AG04450 (cell line): ENCODE measurements at regions of chr4 and their contacts with region 1.

Region 1: GRCh38 chr4:140359562-140360427 is 13.7 kb upstream of the SCOC start:
- DNase-seq: peak; percentile 42
- H3K4me3 ChIP-seq: no peak overlapping the region
- H3K27ac ChIP-seq: no peak overlapping the region
- H3K27me3 ChIP-seq: no peaks in the 10 kb centered on the region
- CTCF ChIP-seq: peak; percentile 75

Region 2: GRCh38 chr4:140012688-140013486 is 346.9 kb before region 1 on chr4:
- CTCF ChIA-PET with region 1: interaction called, 11 read pairs
- POLR2A ChIA-PET with region 1: no interaction called
- DNase-seq: peak; percentile 77
- H3K4me3 ChIP-seq: no peak overlapping the region
- H3K27ac ChIP-seq: no peak overlapping the region
- H3K27me3 ChIP-seq: no peaks in the 10 kb centered on the region
- CTCF ChIP-seq: peak; percentile 80

Region 3: GRCh38 chr4:140343303-140343702 is 16.5 kb before region 1 on chr4:
- CTCF ChIA-PET with region 1: interaction called, 29 read pairs
- POLR2A ChIA-PET with region 1: no interaction called
- DNase-seq: no peak
- H3K4me3 ChIP-seq: no peak overlapping the region
- H3K27ac ChIP-seq: no peak overlapping the region
- H3K27me3 ChIP-seq: peaks cover 9% of the 10 kb centered on the region
- CTCF ChIP-seq: no peak

Region 4: GRCh38 chr4:140382732-140383131 is 22.9 kb after region 1 on chr4:
- CTCF ChIA-PET with region 1: interaction called, 10 read pairs
- POLR2A ChIA-PET with region 1: no interaction called
- DNase-seq: no peak
- H3K4me3 ChIP-seq: no peak overlapping the region
- H3K27ac ChIP-seq: no peak overlapping the region
- H3K27me3 ChIP-seq: no peaks in the 10 kb centered on the region
- CTCF ChIP-seq: no peak

Region 5: GRCh38 chr4:140764774-140765392 is 405.1 kb after region 1 on chr4:
- CTCF ChIA-PET with region 1: no interaction called
- POLR2A ChIA-PET with region 1: no interaction called
- DNase-seq: no peak
- H3K4me3 ChIP-seq: no peak overlapping the region
- H3K27ac ChIP-seq: no peak overlapping the region
- H3K27me3 ChIP-seq: peaks cover 3% of the 10 kb centered on the region
- CTCF ChIP-seq: no peak

Region 6: GRCh38 chr4:140851032-140851636 is 491.3 kb after region 1 on chr4:
- CTCF ChIA-PET with region 1: interaction called, 56 read pairs
- POLR2A ChIA-PET with region 1: no interaction called
- DNase-seq: peak; percentile 43
- H3K4me3 ChIP-seq: no peak overlapping the region
- H3K27ac ChIP-seq: no peak overlapping the region
- H3K27me3 ChIP-seq: no peaks in the 10 kb centered on the region
- CTCF ChIP-seq: peak; percentile 81

Region 7: DNA sequence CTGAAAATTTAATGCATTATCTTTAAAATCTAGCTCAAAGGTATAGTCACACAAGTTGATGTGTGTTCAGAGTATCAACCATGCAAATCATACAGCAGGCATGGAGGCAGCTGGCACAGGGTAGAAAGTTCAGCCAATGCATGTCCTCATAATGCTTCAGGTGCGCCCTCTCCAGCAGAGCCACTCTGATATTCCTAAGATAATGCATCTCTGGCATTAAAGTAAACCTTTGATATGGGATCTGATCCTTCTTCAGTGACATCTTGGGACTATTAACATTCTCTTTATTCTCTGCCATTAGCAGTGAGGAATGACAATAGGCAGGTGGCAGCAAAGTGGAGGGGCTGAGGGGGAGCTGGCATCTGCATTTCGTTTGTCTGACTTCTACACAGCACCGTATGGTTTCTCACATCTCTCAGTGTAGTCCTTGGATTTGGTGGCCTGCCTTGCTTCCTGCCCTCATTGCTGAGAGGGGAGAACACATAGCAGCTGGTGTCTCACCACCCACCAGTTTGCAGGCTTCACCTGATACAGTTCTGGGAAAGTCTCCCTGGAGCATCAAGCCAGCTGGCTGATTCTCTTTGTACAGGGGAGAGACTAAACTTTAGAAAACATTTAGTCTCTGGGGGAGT is 565.1 kb after region 1 on chr4:
- CTCF ChIA-PET with region 1: no interaction called
- POLR2A ChIA-PET with region 1: no interaction called
- DNase-seq: no peak
- H3K4me3 ChIP-seq: no peak overlapping the region
- H3K27ac ChIP-seq: no peak overlapping the region
- H3K27me3 ChIP-seq: no peaks in the 10 kb centered on the region
- CTCF ChIP-seq: no peak